Aorta (tissue), 5 donors: ENCODE measurements at regions of chr10 and their contacts with region 1.

Region 1: DNA sequence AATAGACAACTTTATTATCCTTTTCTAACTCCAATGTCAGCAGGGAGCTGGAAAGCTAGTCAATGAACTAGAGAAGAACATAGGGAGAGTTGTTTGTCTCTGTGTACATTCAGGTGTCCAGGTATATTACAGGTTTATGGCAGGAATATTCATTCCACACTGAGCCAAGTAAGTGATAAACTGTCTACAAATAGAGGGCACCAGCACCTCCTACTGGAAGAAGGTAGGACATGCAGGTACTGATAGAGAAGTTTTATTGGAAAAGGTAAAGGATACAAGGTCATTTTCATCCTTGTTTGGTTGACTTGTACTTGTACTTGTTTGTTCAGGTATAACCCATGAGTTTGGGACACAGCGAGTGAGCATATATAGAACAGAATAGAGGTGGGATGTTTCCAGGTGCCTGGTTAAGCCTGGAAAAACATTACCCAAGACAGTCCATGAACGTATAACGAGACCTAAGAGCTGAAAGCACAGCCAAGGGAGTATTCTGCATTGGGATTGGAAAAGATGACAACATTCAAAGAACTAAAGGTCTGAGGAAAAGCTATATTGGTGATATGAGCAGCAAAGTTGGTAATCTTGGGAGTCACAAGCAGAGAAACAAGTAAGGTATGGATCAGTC is 61.4 kb upstream of the PPP1R3C start:
- DNase-seq: no peak
- ATAC-seq: no peak
- H3K4me3 ChIP-seq: no peak overlapping the region
- H3K27ac ChIP-seq: no peak overlapping the region
- H3K4me1 ChIP-seq: peaks cover 3 to 4% of the 10 kb centered on the region in 2 donors
- H3K27me3 ChIP-seq: no peaks in the 10 kb centered on the region

Region 2: DNA sequence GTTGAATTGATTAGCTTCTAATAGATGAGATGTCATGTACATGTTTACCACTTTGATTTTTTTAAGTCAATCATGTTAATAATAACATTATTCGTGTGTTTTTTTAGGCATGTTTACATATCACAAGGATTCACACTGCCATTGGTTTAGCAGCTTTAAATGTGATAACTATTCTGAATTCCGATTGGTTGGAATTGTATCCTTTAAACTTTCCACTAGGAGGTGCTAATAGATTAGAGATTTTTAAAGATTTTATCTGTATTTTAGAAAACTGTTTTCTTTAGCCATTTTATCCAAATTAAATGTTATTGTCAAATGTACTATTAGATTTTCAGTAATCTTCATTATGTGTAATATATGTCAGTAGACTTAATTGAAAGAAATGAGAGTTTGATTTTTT is 201.0 kb before region 1 on chr10:
- intact Hi-C with region 1: loop called (anchors 5 kb)
- DNase-seq: no peak
- ATAC-seq: no peak
- H3K4me3 ChIP-seq: no peak overlapping the region
- H3K27ac ChIP-seq: no peak overlapping the region
- H3K4me1 ChIP-seq: no peaks in the 10 kb centered on the region
- H3K27me3 ChIP-seq: no peaks in the 10 kb centered on the region

Region 3: DNA sequence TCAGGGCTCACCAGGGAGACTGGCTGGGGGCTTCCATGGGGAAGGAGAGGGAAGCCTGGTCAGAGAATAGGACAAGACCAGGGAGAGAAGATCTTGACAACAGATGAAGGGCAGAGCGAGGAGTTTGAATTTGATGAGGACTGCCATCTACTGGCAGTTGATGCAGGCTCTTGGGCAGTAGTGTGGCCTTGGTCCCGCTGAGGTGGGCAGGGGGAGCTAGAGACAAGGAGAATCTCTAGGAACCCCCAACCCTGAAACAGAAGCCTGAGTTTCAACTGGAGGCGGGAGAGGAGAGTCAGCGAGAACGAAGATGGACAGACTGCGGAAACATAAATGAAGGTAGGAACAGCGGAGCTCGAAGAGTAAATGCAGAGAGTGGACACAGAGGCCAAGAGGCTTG is 142.4 kb before region 1 on chr10:
- intact Hi-C with region 1: loop called in 1 of 2 experiments (anchors 10 kb)
- DNase-seq: no peak
- ATAC-seq: peak; percentile 83
- H3K4me3 ChIP-seq: no peak overlapping the region
- H3K27ac ChIP-seq: no peak overlapping the region
- H3K4me1 ChIP-seq: no peaks in the 10 kb centered on the region
- H3K27me3 ChIP-seq: no peaks in the 10 kb centered on the region

Region 4: GRCh38 chr10:91579329-91579985 is 114.8 kb before region 1 on chr10:
- intact Hi-C with region 1: loop called in 1 of 2 experiments (anchors 10 kb)
- DNase-seq: no peak
- ATAC-seq: no peak
- H3K4me3 ChIP-seq: no peak overlapping the region
- H3K27ac ChIP-seq: peak overlapping the region; percentile 71 to 91
- H3K4me1 ChIP-seq: peaks cover 9 to 14% of the 10 kb centered on the region in 2 donors
- H3K27me3 ChIP-seq: no peaks in the 10 kb centered on the region

Region 5: GRCh38 chr10:91590142-91590903 is 104.0 kb before region 1 on chr10:
- intact Hi-C with region 1: no loop called
- DNase-seq: peak; percentile 91 to 92
- ATAC-seq: peak; percentile 80
- H3K4me3 ChIP-seq: no peak overlapping the region
- H3K27ac ChIP-seq: peak overlapping the region; percentile 98
- H3K4me1 ChIP-seq: peaks cover 7 to 35% of the 10 kb centered on the region in 2 donors
- H3K27me3 ChIP-seq: no peaks in the 10 kb centered on the region